ENCODE measurements at regions of chr19 and their contacts with region 1.

Region 1: GRCh38 chr19:5031231-5032100 is 62.6 kb downstream of the KDM4B start:
- DNase-seq: peak; percentile 57 to 92
- H3K4me3 ChIP-seq: no peak overlapping the region
- H3K4me1 ChIP-seq: peaks cover 3% of the 10 kb centered on the region; the same call in 1 of the 2 replicates
- H3K27me3 ChIP-seq: no peaks in the 10 kb centered on the region

Region 2: DNA sequence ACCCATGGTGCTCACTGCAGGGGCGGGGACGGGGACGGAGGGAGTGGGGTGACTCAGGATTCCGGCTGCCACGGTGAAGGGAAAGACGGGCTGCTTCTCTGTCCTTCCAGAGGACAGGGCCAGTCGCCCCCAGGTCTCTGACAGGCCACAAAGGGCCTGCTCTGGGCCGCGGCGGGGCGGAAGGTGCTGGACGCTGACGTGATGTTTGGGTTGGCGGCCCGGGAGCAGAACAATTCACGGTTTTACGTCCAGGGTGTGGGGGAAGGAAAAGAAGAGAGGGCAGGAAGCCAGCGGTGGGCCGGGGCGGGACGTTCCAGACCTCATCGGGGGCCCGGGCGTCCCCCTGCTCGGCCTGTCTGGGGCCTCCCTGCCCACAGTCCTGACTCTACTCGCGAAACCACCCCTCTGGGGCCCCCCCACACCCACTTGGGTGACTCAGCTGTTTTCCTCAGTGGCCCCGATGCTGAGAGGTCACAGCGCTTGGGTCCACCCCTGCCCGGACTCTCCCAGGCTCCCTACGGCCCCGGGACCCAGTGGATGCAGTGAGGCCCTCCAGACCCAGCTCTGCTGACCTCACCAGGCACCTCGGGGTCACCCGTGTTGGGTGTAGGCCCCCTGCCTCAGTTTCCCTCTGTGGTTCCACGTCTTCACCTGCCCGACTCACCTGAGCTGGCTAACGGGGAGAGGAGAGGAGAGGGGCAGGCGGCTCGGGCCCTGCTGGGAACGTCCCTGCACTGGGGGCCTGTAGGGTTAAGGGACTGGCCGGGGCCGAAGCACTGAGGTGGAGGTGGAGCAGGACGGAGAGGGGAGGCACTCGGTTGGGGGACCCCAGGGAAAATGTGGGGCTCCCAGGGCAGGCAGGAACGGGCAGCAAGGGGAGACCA is 1360.4 kb before region 1 on chr19:
- in situ Hi-C with region 1: no loop called
- DNase-seq: no peak
- H3K4me3 ChIP-seq: no peak overlapping the region
- H3K4me1 ChIP-seq: no peaks in the 10 kb centered on the region
- H3K27me3 ChIP-seq: no peaks in the 10 kb centered on the region

Region 3: GRCh38 chr19:5068233-5069072 is 37.0 kb after region 1 on chr19:
- in situ Hi-C with region 1: no loop called
- DNase-seq: no peak
- H3K4me3 ChIP-seq: no peak overlapping the region
- H3K4me1 ChIP-seq: peaks cover 11% of the 10 kb centered on the region
- H3K27me3 ChIP-seq: no peaks in the 10 kb centered on the region

Region 4: GRCh38 chr19:5261188-5261890 is 229.9 kb after region 1 on chr19:
- in situ Hi-C with region 1: no loop called
- DNase-seq: no peak
- H3K4me3 ChIP-seq: no peak overlapping the region
- H3K4me1 ChIP-seq: no peaks in the 10 kb centered on the region
- H3K27me3 ChIP-seq: no peaks in the 10 kb centered on the region

Region 5: GRCh38 chr19:5577785-5578493 is 546.5 kb after region 1 on chr19:
- in situ Hi-C with region 1: loop called (anchors 10 kb)
- DNase-seq: peak; percentile 60 to 87
- H3K4me3 ChIP-seq: peak overlapping the region; percentile 12
- H3K4me1 ChIP-seq: peaks cover 4% of the 10 kb centered on the region
- H3K27me3 ChIP-seq: no peaks in the 10 kb centered on the region